CD14-positive monocyte (primary cell): ENCODE measurements at regions of chr6 and their contacts with region 1.

Region 1: DNA sequence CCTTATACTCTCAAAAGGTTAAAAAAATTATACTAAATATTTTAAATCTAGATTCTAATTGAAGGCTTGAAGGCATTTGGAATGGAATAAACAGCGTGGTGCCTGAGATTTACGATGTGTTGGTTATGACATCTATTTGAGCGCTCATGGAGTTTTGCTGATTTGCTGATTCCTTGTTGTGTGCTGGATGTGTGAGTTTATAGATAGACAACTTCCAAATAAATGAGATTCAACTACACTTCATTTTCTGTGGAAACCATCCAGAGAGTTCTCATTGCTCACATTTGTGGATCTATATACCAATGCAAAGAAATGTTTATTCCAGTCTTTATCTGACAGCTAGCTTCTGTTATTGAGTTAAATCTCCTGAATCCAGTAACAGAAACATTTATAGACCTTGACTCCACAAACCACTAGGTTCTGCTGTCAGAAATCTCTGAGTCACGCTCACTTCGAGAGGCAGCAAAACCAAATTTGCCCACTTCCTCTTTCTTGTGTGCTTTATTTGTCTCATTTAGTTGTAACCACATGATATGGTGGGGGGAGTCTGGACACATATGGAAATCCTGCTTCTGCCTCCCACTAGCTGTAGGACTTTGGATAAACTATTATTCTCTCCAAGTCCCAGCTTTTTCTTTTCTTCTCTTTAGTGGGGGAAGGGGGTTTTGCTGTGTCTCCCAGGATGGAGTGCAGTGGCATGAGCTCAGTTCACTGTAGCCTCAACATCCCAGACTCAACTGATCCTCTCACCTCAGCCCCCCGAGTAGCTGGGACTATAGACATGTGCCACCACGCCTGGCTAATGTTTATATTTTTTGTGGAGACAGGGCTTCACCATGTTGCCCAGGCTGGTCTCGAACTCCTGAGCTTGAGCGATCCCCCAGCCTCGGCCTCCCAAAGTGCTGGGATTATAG is 54.5 kb downstream of the IPCEF1 start:
- DNase-seq: peak; percentile 83 to 95 (median 91)
- H3K4me3 ChIP-seq: peak overlapping the region in 1 of 3 experiments; percentile 35
- H3K4me3 Mint-ChIP-seq: peak overlapping the region; percentile 6 to 42
- H3K27ac ChIP-seq: peak overlapping the region in 1 of 2 donors; percentile 72
- H3K27ac Mint-ChIP-seq: peak overlapping the region; percentile 74 to 89 (median 81)
- H3K4me1 ChIP-seq: peaks cover 65 to 72% of the 10 kb centered on the region in 2 donors
- H3K4me1 Mint-ChIP-seq: peaks cover 77% of the 10 kb centered on the region
- H3K27me3 ChIP-seq: no peaks in the 10 kb centered on the region
- H3K27me3 Mint-ChIP-seq: no peaks in the 10 kb centered on the region
- CTCF ChIP-seq: no peak

Region 2: DNA sequence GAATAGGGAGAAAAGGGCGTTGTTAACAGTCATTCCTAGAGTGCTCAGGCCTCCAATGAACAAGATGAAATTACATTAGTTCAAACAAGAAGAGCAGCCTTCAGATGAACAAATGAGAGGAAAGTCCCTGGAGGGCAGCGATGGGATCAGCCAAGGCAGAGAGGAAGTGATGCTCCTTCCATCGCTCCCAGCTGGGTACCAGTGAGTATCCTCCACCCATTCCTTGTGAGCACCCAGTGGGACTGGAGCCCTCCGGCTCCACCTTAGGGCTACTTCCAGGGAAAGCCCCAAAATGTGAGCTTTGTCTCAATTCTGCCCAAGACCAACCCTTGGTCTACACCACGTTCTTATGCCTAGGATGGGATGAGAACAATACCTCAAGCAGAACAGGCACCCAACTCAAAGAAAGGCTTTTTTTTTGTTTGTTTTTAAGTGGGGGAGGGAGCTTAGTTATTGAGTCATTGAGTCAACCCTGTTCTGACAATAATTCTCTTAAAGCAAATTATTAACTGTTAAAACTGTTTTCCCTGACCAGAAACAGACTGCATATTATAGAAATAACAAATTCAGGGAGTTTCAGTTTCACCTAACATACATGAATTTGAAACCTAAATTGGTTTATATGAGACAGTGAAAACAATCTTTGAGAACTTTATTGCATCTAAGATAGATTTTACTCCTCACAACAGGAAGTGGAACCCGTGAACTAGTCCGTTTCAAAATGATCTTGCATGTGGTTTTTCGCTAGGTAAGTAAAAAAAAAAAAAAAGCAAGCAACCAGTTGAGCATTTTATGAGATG is 52.4 kb before region 1 on chr6:
- intact Hi-C with region 1: loop called in 1 of 2 experiments (anchors 10 kb)
- DNase-seq: peak in 2 of 3 donors; percentile 49 to 52
- H3K4me3 ChIP-seq: peak overlapping the region in 1 of 3 experiments; percentile 25
- H3K4me3 Mint-ChIP-seq: no peak overlapping the region
- H3K27ac ChIP-seq: peak overlapping the region; percentile 19 to 64
- H3K27ac Mint-ChIP-seq: peak overlapping the region; percentile 15 to 82 (median 50)
- H3K4me1 ChIP-seq: peaks cover 56 to 76% of the 10 kb centered on the region in 2 donors
- H3K4me1 Mint-ChIP-seq: peaks cover 70% of the 10 kb centered on the region
- H3K27me3 ChIP-seq: no peaks in the 10 kb centered on the region
- H3K27me3 Mint-ChIP-seq: no peaks in the 10 kb centered on the region
- CTCF ChIP-seq: no peak

Region 3: GRCh38 chr6:154359161-154359574 is 57.1 kb after region 1 on chr6:
- intact Hi-C with region 1: loop called in 1 of 2 experiments (anchors 5 kb)
- DNase-seq: peak in 2 of 3 donors; percentile 62 to 70
- H3K4me3 ChIP-seq: peak overlapping the region in 2 of 3 experiments; percentile 53 to 66
- H3K4me3 Mint-ChIP-seq: peak overlapping the region; percentile 73 to 88
- H3K27ac ChIP-seq: peak overlapping the region; percentile 44 to 61
- H3K27ac Mint-ChIP-seq: peak overlapping the region; percentile 80 to 94 (median 90)
- H3K4me1 ChIP-seq: peaks cover 50 to 59% of the 10 kb centered on the region in 2 donors
- H3K4me1 Mint-ChIP-seq: peaks cover 65% of the 10 kb centered on the region
- H3K27me3 ChIP-seq: no peaks in the 10 kb centered on the region
- H3K27me3 Mint-ChIP-seq: peaks cover 0 to 3% (median 0%) of the 10 kb centered on the region in 3 donors
- CTCF ChIP-seq: no peak

Region 4: DNA sequence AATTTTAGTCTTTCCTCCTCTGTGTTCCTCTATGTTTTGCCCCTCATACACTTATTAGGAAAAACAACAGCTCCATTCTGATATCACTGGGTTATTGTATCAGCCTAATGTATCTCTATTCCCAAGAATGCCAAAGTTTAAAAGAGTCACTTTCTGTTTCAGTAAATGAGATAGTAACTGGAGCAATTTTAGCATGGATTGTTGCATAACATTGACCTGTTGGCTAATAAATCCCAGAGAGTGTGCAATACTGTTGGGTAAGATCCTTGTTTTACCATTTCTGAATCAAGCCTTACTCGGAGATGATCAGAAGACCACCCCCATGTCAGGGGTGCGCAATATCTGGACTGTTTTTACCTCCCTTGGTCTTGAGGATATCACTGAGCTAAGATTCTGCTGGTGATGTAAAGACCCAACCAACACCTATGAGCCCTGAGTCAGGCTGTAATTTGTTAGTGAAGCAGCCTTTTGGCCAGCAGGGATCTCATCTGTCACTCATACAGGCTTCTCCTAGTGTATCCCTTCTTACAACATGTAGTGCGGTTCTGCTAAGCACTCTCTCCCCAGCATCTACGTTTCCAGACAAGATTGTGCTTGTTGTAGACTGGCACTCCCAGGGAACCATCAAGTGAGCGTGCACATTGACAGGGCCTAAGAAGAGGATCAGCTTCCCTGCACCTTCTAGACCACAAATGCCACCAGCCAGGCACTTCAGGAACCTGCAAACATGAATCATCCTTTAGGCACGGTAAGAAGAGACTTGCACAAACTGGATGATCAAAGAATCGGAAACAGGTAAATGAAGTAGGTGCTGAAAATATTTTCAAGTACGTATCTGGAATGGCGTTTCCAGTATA is 66.0 kb after region 1 on chr6:
- intact Hi-C with region 1: loop called in 1 of 2 experiments (anchors 5 kb)
- DNase-seq: peak in 2 of 3 donors; percentile 64 to 73
- H3K4me3 ChIP-seq: peak overlapping the region in 1 of 3 experiments; percentile 54
- H3K4me3 Mint-ChIP-seq: peak overlapping the region; percentile 56 to 84
- H3K27ac ChIP-seq: peak overlapping the region; percentile 44 to 76
- H3K27ac Mint-ChIP-seq: peak overlapping the region; percentile 88 to 95 (median 94)
- H3K4me1 ChIP-seq: peaks cover 37 to 49% of the 10 kb centered on the region in 2 donors
- H3K4me1 Mint-ChIP-seq: peaks cover 53% of the 10 kb centered on the region
- H3K27me3 ChIP-seq: no peaks in the 10 kb centered on the region
- H3K27me3 Mint-ChIP-seq: no peaks in the 10 kb centered on the region
- CTCF ChIP-seq: no peak